Activated T-helper 1 cell treated with anti-CD3 and anti-CD28 coated beads, Interleukin-12 subunit alpha, Interleukin-12 subunit beta, Interleukin-2, Interleukin-4 antibody, amounts not matched to agents 30 ng/mL and 10 ng/mL and 1 ng/mL, durations not matched to agents 14 hours and 24 hours and 36 hours (primary cell): ENCODE measurements at regions of chr12 and their contacts with region 1.

Region 1: GRCh38 chr12:47216150-47216677 is 136.5 kb upstream of the AMIGO2 start:
- DNase-seq: peak; percentile 72
- H3K4me3 Mint-ChIP-seq: peak overlapping the region; percentile 93
- H3K27ac Mint-ChIP-seq: peak overlapping the region; percentile 96
- H3K4me1 Mint-ChIP-seq: peaks cover 63% of the 10 kb centered on the region
- H3K27me3 Mint-ChIP-seq: no peaks in the 10 kb centered on the region

Region 2: GRCh38 chr12:46217541-46218321 is 998.5 kb before region 1 on chr12:
- intact Hi-C with region 1: loop called (anchors 2 kb)
- DNase-seq: peak; percentile 64
- H3K4me3 Mint-ChIP-seq: peak overlapping the region; percentile 68
- H3K27ac Mint-ChIP-seq: peak overlapping the region; percentile 92
- H3K4me1 Mint-ChIP-seq: peaks cover 97% of the 10 kb centered on the region
- H3K27me3 Mint-ChIP-seq: no peaks in the 10 kb centered on the region

Region 3: DNA sequence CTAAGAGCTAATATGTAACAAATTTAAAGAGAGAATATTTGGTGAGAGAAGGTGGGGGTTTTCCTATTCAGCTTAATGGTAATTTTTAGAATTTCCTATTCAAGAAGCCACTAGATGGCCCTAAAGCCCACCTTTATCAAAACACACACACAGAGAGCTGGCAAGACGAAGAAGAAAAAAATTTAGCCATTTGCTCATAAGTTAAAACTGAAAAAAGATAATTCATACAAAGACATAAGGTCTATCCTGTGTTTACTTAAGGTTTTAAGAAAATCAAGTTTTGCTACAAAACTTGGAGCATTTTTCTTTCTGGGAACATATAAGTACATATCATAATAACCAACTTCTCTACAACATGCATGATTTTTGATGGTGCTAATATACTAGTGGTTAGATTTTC is 183.6 kb before region 1 on chr12:
- intact Hi-C with region 1: loop called (anchors 2 kb)
- DNase-seq: no peak
- H3K4me3 Mint-ChIP-seq: no peak overlapping the region
- H3K27ac Mint-ChIP-seq: no peak overlapping the region
- H3K4me1 Mint-ChIP-seq: peaks cover 11% of the 10 kb centered on the region
- H3K27me3 Mint-ChIP-seq: peaks cover 6% of the 10 kb centered on the region

Region 4: GRCh38 chr12:47124451-47124850 is 91.8 kb before region 1 on chr12:
- intact Hi-C with region 1: no loop called
- DNase-seq: no peak
- H3K4me3 Mint-ChIP-seq: no peak overlapping the region
- H3K27ac Mint-ChIP-seq: no peak overlapping the region
- H3K4me1 Mint-ChIP-seq: peaks cover 10% of the 10 kb centered on the region
- H3K27me3 Mint-ChIP-seq: no peaks in the 10 kb centered on the region

Region 5: GRCh38 chr12:47184229-47184628 is 32.0 kb before region 1 on chr12:
- intact Hi-C with region 1: no loop called
- DNase-seq: no peak
- H3K4me3 Mint-ChIP-seq: no peak overlapping the region
- H3K27ac Mint-ChIP-seq: no peak overlapping the region
- H3K4me1 Mint-ChIP-seq: peaks cover 16% of the 10 kb centered on the region
- H3K27me3 Mint-ChIP-seq: no peaks in the 10 kb centered on the region

Region 6: GRCh38 chr12:47228802-47229201 is 12.6 kb after region 1 on chr12:
- intact Hi-C with region 1: loop called (anchors 1 kb)
- DNase-seq: no peak
- H3K4me3 Mint-ChIP-seq: no peak overlapping the region
- H3K27ac Mint-ChIP-seq: no peak overlapping the region
- H3K4me1 Mint-ChIP-seq: peaks cover 46% of the 10 kb centered on the region
- H3K27me3 Mint-ChIP-seq: no peaks in the 10 kb centered on the region

Region 7: DNA sequence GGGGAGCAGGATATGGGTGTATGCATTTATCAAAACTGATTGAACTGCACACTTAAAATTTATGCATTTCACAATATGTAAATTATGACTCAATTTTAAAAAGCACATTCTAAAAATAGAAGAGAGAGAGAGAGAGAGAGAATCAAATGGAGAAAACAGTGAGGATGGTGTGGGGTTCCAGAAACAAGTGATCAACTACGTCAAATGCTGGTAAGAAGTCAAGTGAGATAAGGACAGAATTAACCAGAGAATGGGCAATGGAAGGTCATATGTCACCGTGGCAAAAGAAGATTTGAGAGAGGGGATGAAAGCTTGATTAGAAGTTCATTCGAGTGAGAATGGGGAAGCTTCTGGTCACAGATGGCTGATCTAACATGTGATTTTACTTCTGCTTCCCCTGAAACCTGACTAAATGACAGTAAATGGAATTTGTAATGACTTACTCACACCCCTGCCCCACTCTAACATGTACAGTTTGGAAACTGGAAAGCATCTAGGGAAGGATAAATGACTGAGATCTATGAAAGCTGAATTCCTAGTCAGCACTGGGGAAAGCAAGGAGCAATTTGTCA is 140.0 kb after region 1 on chr12:
- intact Hi-C with region 1: loop called (anchors 1 kb)
- DNase-seq: no peak
- H3K4me3 Mint-ChIP-seq: peak overlapping the region; percentile 60
- H3K27ac Mint-ChIP-seq: peak overlapping the region; percentile 97
- H3K4me1 Mint-ChIP-seq: peaks cover 73% of the 10 kb centered on the region
- H3K27me3 Mint-ChIP-seq: no peaks in the 10 kb centered on the region

Region 8: DNA sequence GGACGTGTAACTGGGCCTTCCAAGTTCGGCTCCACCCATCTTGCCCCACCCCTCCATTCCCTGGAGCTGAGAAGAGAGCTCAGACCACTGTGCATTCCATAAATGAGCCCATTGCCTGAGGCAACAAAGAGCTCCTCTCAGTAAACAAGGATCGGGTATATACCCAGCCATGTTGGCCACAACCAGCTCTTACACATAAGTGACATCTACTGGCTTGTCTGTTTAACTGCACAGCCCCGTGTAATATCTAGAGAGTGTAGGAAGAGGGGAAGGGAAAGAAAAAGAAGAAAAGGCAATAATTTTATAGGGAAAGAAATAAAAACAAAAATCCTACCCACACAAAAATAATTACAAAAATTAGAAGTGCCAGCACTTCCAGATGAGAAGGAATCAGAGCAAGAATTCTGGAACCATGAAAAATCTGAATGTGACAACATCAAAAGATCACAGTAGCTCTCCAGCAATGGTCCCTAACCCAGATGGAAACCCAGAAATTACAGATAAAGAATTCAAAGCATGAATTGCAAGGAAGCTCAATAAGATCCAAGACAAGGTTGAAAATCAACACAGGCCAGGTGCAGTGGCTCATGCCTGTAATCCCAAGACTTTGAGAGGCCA is 181.6 kb after region 1 on chr12:
- intact Hi-C with region 1: loop called (anchors 1 kb)
- DNase-seq: peak; percentile 41
- H3K4me3 Mint-ChIP-seq: no peak overlapping the region
- H3K27ac Mint-ChIP-seq: peak overlapping the region; percentile 89
- H3K4me1 Mint-ChIP-seq: peaks cover 90% of the 10 kb centered on the region
- H3K27me3 Mint-ChIP-seq: no peaks in the 10 kb centered on the region

Region 9: GRCh38 chr12:47882781-47883546 is 666.8 kb after region 1 on chr12:
- intact Hi-C with region 1: loop called (anchors 5 kb)
- DNase-seq: peak; percentile 44
- H3K4me3 Mint-ChIP-seq: peak overlapping the region; percentile 94
- H3K27ac Mint-ChIP-seq: peak overlapping the region; percentile 100
- H3K4me1 Mint-ChIP-seq: peaks cover 91% of the 10 kb centered on the region
- H3K27me3 Mint-ChIP-seq: no peaks in the 10 kb centered on the region